A673 (cell line): ENCODE measurements at regions of chr1 and their contacts with region 1.

Region 1: DNA sequence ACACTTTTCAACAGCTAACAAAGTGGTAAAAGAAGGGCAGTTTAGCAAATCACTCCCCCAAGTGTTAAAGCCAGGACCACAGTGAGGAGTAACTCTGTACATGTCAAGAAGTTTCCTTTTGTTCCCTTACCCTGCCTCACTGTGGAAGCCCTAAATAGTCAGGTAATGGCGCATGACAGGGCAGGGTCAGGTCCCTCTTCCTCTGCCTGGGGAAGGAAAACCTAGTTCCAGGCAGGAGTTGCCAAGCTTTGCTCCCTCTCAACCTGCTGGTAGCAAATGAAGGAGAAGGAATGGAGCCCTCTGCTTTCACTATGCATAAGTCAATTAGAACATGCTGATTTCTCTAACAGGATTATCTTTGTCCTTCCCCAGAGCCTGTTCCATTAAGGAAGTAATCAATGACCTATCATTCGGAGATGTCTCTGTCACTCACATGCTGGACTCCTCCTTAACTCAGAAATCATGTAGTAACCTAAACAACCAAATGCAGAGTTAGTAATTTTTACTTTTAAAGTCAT is 161.9 kb upstream of the NFIA start:
- DNase-seq: peak; percentile 17
- H3K4me3 ChIP-seq: no peak overlapping the region
- H3K27ac ChIP-seq: no peak overlapping the region
- H3K4me1 ChIP-seq: peaks cover 4% of the 10 kb centered on the region
- H3K27me3 ChIP-seq: no peaks in the 10 kb centered on the region
- CTCF ChIP-seq: no peak

Region 2: DNA sequence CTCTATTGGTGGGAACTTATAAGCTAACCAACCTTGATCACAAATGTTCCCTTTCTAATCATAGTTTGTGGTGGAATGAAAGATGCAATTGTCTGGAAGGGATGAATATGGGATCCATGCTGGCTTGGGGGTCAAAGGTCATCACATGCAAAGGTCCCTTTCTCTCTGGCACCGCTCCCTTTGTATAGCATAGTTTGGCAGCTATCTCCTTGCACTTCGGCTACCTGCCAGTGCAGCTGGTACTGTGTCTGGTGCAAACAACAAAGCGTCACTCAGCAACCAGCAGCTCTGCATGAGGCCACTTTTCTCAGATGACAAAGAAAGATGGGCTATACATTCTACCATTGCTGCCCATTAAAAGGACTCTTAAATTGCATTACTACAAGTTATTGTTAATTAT is 26.4 kb before region 1 on chr1:
- CTCF ChIA-PET with region 1: no interaction called
- POLR2A ChIA-PET with region 1: no interaction called
- intact Hi-C with region 1: no loop called
- DNase-seq: no peak
- H3K4me3 ChIP-seq: no peak overlapping the region
- H3K27ac ChIP-seq: no peak overlapping the region
- H3K4me1 ChIP-seq: no peaks in the 10 kb centered on the region
- H3K27me3 ChIP-seq: no peaks in the 10 kb centered on the region
- CTCF ChIP-seq: no peak

Region 3: GRCh38 chr1:61776091-61776490 is 855.6 kb after region 1 on chr1:
- CTCF ChIA-PET with region 1: interaction called, 16 read pairs
- POLR2A ChIA-PET with region 1: no interaction called
- intact Hi-C with region 1: no loop called
- DNase-seq: no peak
- H3K4me3 ChIP-seq: no peak overlapping the region
- H3K27ac ChIP-seq: no peak overlapping the region
- H3K4me1 ChIP-seq: no peaks in the 10 kb centered on the region
- H3K27me3 ChIP-seq: no peaks in the 10 kb centered on the region
- CTCF ChIP-seq: no peak